Activated B cell treated with CpG ODN at 0.5 μM for 24 hours (primary cell): ENCODE measurements at regions of chr13 and their contacts with region 1.

Region 1: GRCh38 chr13:51614350-51614786 is 30.1 kb downstream of the WDFY2 start:
- DNase-seq: no peak
- ATAC-seq: peak; percentile 86
- H3K4me3 Mint-ChIP-seq: peak overlapping the region; percentile 90
- H3K27ac Mint-ChIP-seq: peak overlapping the region; percentile 97
- H3K4me1 Mint-ChIP-seq: peaks cover 58% of the 10 kb centered on the region
- H3K27me3 Mint-ChIP-seq: no peaks in the 10 kb centered on the region
- CTCF ChIP-seq: no peak

Region 2: GRCh38 chr13:51625555-51626345 is 11.4 kb after region 1 on chr13:
- CTCF ChIA-PET with region 1: interaction called, 5 read pairs
- POLR2A ChIA-PET with region 1: interaction called, 5 read pairs
- intact Hi-C with region 1: loop called (anchors 1 kb)
- DNase-seq: no peak
- ATAC-seq: no peak
- H3K4me3 Mint-ChIP-seq: no peak overlapping the region
- H3K27ac Mint-ChIP-seq: no peak overlapping the region
- H3K4me1 Mint-ChIP-seq: peaks cover 27% of the 10 kb centered on the region
- H3K27me3 Mint-ChIP-seq: no peaks in the 10 kb centered on the region
- CTCF ChIP-seq: no peak

Region 3: DNA sequence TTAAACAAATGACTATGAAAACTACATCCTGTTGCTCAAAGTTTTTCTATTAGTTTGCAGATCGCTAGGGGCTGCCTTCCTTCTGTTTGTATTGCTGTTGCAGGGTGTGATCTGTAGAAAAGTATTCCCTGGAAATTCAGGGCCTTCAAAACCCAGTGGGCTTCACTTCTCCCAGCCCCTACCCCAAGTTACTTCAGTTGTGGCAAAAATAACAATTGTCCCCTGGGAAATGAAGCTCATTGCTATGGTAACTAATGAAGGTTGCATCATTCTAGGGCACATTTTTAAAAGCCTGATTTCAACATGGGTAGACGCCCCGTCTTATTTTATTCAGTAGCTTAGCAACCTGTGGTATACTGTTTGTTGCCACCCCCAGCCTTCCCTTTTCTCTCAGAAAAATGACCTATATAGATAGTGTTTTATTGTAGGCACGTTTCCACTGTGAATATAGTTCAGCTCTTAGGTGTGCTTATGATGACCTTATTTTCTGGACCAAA is 30.8 kb after region 1 on chr13:
- CTCF ChIA-PET with region 1: no interaction called
- POLR2A ChIA-PET with region 1: interaction called, 8 read pairs
- intact Hi-C with region 1: loop called (anchors 2 kb)
- DNase-seq: no peak
- ATAC-seq: peak; percentile 78
- H3K4me3 Mint-ChIP-seq: peak overlapping the region; percentile 62
- H3K27ac Mint-ChIP-seq: peak overlapping the region; percentile 90
- H3K4me1 Mint-ChIP-seq: peaks cover 59% of the 10 kb centered on the region
- H3K27me3 Mint-ChIP-seq: no peaks in the 10 kb centered on the region
- CTCF ChIP-seq: no peak